PC-9 (cell line): ENCODE measurements at regions of chr10 and their contacts with region 1.

Region 1: DNA sequence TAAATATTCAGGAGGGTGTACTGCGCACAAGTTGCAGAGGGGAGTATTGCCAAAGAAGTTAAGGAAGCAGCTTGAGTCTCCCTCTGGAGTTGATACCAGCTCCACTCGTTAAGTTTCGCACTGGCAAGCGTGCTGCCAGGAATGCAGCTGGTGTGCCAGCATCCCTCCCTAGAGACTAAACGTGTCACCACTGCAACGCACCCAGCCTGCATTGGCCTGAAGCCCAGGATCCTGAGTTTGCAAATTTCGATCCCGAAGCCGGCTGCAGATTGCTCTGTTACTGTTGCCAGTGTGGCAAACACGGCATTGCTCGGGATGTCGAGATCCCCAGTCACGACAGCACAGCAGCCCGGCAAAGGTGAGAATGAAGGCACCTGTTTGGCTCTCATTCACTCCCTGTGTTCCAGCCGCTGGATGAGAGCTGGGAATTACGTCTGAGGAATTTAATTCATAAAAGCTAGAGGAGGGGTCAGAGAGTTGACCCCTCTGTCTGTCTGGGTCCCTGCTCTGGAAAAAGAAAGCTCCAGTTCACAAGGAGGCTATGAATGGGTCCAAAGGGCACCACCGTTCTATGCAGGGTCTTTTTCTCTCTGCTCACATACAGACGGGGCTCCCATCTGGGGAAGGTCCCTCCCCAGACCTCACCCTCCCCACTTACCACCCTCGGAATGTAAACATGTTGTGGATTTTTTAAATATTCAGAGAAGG is 61.0 kb downstream of the NRP1 start:
- DNase-seq: peak; percentile 94 to 95
- H3K4me3 ChIP-seq: peak overlapping the region; percentile 45; the same call in 1 of the 2 replicates
- H3K27ac ChIP-seq: peak overlapping the region; percentile 98
- H3K4me1 ChIP-seq: peaks cover 32% of the 10 kb centered on the region
- H3K27me3 ChIP-seq: no peaks in the 10 kb centered on the region
- CTCF ChIP-seq: no peak

Region 2: DNA sequence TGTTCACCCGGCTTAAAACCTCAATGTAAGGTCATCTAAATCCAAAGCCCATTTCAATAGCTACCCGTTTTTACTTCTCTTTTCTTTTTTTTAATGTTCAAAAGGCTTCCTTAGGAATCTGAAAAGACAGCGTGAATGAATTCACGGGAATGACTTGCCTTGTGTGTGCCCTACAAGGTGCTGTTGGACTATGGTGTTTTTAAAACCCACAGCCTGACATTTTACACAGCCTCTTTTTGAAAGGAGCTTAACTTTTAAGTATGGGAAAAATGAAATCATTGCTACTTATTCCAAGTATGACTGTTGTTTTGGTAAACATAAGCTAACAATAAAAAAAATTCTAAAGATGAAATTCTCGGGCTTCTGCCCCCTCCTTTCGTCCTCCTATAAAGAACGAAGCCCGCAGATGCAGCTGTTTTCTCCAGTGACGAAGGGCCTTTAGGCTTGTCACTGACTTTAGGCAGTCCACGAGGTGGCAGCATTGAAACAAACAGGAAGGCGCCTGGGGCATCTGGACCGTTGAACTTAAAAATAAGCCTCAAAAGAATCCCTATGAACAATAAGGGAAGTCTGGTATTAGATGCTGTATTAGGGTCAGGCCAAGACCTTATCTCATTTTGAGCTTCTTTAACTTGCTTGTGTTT is 80.3 kb before region 1 on chr10:
- CTCF ChIA-PET with region 1: no interaction called
- POLR2A ChIA-PET with region 1: no interaction called
- intact Hi-C with region 1: loop called (anchors 2 kb)
- DNase-seq: peak; percentile 35 to 75
- H3K4me3 ChIP-seq: no peak overlapping the region
- H3K27ac ChIP-seq: no peak overlapping the region
- H3K4me1 ChIP-seq: no peaks in the 10 kb centered on the region
- H3K27me3 ChIP-seq: no peaks in the 10 kb centered on the region
- CTCF ChIP-seq: peak; percentile 66

Region 3: DNA sequence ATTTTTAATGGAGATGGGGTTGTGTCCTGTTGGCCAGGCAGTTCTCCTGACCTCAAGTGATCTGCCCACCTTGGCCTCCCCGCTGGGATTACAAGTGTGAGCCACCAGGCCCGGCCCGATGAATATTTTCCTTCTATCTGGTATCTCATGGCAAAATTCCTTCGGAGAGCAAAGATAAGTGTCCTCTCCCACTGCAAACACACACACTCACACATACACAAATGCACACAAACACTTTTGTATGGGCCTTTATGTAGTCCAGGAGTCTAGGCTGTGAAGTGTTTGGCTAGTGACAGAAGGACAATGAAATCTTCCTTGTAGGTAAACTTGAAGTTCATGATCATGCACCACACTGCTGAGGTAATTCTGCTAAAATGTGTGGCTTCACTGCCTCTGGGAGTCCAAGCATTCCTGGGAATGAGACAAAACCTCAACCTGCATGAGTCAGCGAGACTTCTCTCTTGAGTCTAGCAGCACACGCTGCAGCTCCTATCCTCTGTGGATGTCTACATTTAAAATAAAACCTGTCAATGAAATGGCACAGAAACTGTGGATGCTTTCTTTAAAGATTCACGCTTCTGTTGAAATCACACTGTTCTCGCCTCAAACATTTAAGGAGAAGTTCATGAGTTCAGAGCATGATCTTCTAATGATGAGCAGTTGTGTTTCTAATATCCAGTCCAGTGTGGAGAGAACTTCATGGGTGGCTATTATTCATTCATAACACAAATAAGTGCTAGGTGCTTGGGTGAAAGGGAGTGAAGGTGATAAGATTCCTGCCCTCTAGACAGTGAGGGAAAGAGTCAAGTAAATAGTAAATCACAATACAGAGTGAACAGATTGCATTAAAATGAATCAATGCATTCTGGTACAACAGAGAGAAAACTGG is 35.5 kb before region 1 on chr10:
- CTCF ChIA-PET with region 1: no interaction called
- POLR2A ChIA-PET with region 1: interaction called, 18 read pairs
- intact Hi-C with region 1: loop called (anchors 2 kb)
- DNase-seq: peak; percentile 72 to 94
- H3K4me3 ChIP-seq: no peak overlapping the region
- H3K27ac ChIP-seq: peak overlapping the region; percentile 89
- H3K4me1 ChIP-seq: peaks cover 56% of the 10 kb centered on the region
- H3K27me3 ChIP-seq: no peaks in the 10 kb centered on the region
- CTCF ChIP-seq: no peak

Region 4: GRCh38 chr10:33291053-33291592 is 17.7 kb after region 1 on chr10:
- CTCF ChIA-PET with region 1: no interaction called
- POLR2A ChIA-PET with region 1: no interaction called
- intact Hi-C with region 1: loop called (anchors 1 kb)
- DNase-seq: peak; percentile 37 to 91
- H3K4me3 ChIP-seq: peak overlapping the region; percentile 31; the same call in 1 of the 2 replicates
- H3K27ac ChIP-seq: peak overlapping the region; percentile 99
- H3K4me1 ChIP-seq: peaks cover 48% of the 10 kb centered on the region
- H3K27me3 ChIP-seq: no peaks in the 10 kb centered on the region
- CTCF ChIP-seq: no peak

Region 5: DNA sequence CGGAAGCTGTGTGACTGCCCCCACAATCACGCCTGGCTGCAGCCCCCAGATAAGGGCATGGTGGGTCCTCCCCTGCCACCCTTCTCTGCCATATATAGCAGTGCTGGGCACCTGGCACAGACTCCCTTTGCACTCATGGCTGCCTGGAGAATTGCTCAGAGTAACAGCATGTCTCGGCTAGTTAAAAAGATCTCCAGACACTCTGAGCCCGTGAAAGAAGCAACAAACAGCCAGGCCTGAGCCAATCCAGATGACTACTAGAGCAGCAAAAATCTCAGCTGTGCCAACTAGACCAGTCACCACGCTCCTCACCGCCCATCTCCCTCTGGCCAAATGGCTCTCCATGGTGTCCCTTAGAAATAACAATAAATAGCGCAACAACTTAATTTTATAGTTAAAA is 1470.4 kb after region 1 on chr10:
- CTCF ChIA-PET with region 1: no interaction called
- POLR2A ChIA-PET with region 1: interaction called, 17 read pairs
- intact Hi-C with region 1: no loop called
- DNase-seq: no peak
- H3K4me3 ChIP-seq: no peak overlapping the region
- H3K27ac ChIP-seq: no peak overlapping the region
- H3K4me1 ChIP-seq: no peaks in the 10 kb centered on the region
- H3K27me3 ChIP-seq: no peaks in the 10 kb centered on the region
- CTCF ChIP-seq: no peak